ENCODE measurements at regions of chr6 and their contacts with region 1.

Region 1: DNA sequence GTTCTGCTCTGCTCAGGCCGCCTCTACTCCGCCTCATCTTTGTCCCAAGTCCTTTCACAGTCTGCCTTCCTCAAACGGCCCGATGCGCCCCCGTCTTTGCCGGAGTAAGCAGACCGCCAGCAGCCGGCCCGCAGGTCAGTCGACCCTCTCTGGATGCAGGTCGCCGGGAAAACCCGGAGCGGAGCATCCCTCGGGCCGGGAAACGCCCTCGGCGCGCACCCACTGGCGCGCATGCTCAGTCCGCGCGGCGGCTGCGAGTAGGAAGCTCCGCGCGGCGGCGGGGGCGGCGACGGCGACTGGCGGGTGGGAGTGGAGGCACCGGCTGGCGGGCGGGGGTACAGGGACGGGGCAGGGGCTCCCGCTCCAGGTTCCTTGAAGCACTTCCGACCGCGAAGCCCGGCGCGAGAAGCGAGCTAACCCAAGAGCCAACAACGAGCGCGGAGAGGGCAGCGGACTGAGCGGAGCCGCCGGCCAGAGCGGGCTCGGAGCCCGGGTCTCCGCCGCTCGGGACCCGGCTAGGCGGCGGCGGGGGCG is at the start of gene LRRC1:
- DNase-seq: peak; percentile 96
- H3K4me3 Mint-ChIP-seq: peak within 1 kb of the TSS; percentile 95
- H3K27ac Mint-ChIP-seq: peak within 1 kb of the TSS; percentile 91
- H3K4me1 Mint-ChIP-seq: peaks cover 58% of the 10 kb centered on the region
- H3K27me3 Mint-ChIP-seq: no peaks in the 10 kb centered on the region
- CTCF ChIP-seq: no peak
- total RNA-seq, gene LRRC1: 26.6 TPM in 2 replicates

Region 2: DNA sequence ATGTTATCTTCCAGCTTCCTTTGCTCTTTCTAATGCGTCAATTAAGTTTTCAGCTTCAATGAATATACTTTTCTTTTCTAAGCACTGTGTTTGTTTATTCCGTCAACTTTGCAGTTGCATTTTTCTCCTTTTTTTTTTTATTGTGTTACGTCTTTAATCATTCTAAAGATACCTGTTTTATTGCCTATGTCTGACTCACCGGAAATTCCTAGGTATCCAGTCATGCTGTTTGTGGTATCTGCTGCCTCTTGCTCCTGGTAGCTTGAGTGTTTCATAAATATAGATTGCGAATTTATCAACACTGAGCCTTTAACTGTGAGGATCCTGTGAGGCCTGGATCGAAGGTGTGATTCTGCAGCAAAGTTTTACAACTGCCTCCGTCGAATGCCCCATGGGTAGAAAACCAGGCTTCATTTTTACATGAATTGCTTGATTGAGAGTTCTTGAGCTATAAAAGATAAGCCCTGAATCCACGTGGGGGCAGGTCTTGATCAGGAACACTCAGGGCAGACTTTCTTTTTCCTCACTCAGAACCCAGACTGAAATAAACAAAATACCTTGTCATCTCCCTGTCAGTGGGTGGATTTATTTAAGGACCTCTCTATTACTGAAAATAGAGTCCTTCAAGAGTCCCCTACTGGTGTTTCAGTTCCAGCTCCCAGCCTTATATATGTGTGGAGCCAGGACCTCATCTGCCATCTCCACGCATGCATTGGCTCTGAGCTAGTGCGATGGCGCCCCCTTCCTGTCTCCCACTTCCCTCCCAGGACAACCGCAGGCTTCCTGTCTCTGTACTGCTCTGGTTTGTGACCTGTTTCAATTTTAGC is 60.1 kb before region 1 on chr6:
- CTCF ChIA-PET with region 1: interaction called, 45 read pairs
- intact Hi-C with region 1: loop called (anchors 2 kb)
- DNase-seq: peak; percentile 79
- H3K4me3 Mint-ChIP-seq: peak overlapping the region; percentile 43
- H3K27ac Mint-ChIP-seq: peak overlapping the region; percentile 90
- H3K4me1 Mint-ChIP-seq: peaks cover 57% of the 10 kb centered on the region
- H3K27me3 Mint-ChIP-seq: no peaks in the 10 kb centered on the region
- CTCF ChIP-seq: peak; percentile 55

Region 3: GRCh38 chr6:53854843-53855567 is 60.2 kb after region 1 on chr6:
- CTCF ChIA-PET with region 1: interaction called, 5 read pairs
- intact Hi-C with region 1: loop called (anchors 2 kb)
- DNase-seq: peak; percentile 49
- H3K4me3 Mint-ChIP-seq: peak overlapping the region; percentile 6
- H3K27ac Mint-ChIP-seq: peak overlapping the region; percentile 67
- H3K4me1 Mint-ChIP-seq: peaks cover 49% of the 10 kb centered on the region
- H3K27me3 Mint-ChIP-seq: no peaks in the 10 kb centered on the region
- CTCF ChIP-seq: no peak

Region 4: GRCh38 chr6:53956068-53956711 is 161.4 kb after region 1 on chr6:
- CTCF ChIA-PET with region 1: interaction called, 73 read pairs
- intact Hi-C with region 1: loop called (anchors 1 kb)
- DNase-seq: peak; percentile 86
- H3K4me3 Mint-ChIP-seq: no peak overlapping the region
- H3K27ac Mint-ChIP-seq: no peak overlapping the region
- H3K4me1 Mint-ChIP-seq: peaks cover 14% of the 10 kb centered on the region
- H3K27me3 Mint-ChIP-seq: no peaks in the 10 kb centered on the region
- CTCF ChIP-seq: peak; percentile 89